K562 (cell line): ENCODE measurements at regions of chr11 and their contacts with region 1.

Region 1: DNA sequence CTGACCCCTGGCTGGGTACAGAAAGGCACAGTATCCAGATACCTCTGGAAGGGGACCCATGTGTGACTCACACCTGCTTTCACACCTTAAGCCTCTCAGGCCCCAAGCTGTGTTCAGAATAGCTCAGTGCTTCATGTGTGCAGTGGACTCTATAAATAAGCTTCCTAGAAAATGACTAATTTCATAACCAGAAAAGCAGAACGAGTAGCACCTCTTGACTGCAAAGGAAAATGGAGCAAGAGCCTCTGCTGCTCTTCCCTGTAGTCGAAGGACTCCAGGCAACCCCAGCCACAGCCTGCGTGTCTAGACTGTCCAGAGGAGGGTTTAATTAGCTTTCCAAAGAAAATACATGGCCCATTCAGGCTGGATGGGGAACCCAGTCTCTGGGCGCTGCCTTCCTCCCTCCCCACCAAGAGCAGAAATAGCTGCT is 23.1 kb downstream of the PTPN5 start:
- DNase-seq: no peak
- ATAC-seq: no peak
- H3K4me3 ChIP-seq: no peak overlapping the region
- H3K27ac ChIP-seq: no peak overlapping the region
- H3K4me1 ChIP-seq: no peaks in the 10 kb centered on the region
- H3K27me3 ChIP-seq: peaks cover 2 to 39% of the 10 kb centered on the region in 2 experiments; a peak in 4 of 5 replicates
- CTCF ChIP-seq: no peak
- EP300 ChIP-seq: no peak
- POLR2A ChIP-seq: no peak
- RAD21 ChIP-seq: no peak

Region 2: GRCh38 chr11:18115360-18116127 is 652.9 kb before region 1 on chr11:
- CTCF ChIA-PET with region 1: interaction called, 3 read pairs
- POLR2A ChIA-PET with region 1: no interaction called
- in situ Hi-C with region 1: no loop called
- intact Hi-C with region 1: loop called (anchors 1 kb)
- DNase-seq: peak; percentile 77 to 80 (median 77)
- ATAC-seq: peak; percentile 98
- H3K4me3 ChIP-seq: no peak overlapping the region
- H3K27ac ChIP-seq: no peak overlapping the region
- H3K4me1 ChIP-seq: no peaks in the 10 kb centered on the region
- H3K27me3 ChIP-seq: peaks cover 11 to 17% of the 10 kb centered on the region in 2 experiments; a peak in 4 of 5 replicates
- CTCF ChIP-seq: peak; percentile 83 to 87 (median 84)
- EP300 ChIP-seq: no peak
- POLR2A ChIP-seq: no peak
- RAD21 ChIP-seq: peak; percentile 63 to 83

Region 3: DNA sequence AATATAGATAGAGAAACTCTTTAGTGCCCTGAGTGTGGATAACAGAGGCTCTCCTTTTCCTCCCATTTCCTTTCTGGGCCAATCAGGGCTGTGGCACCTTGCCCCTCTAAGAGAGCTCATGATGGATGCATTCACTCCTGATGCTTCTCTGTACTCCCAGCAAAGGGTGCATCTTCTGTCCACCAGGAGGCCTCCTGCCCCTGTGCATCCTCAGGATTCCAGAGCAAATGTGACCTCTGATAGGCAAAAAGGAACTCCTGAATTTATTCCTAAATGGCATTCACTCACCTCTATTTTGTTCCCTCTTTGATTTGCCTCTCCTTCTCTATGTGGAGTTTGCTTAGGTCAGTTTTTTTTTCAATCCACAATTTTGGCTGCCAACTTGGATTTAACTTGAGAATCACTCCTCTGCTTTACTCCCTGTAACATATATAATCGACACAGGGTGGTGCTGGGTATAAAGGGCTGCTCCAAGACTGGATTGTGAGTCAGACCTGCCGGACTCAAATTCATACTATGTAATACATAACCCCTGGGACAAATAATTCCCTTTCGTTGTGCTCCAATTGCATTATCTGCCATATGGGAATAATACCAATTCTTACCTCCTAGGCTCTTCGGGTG is 597.0 kb before region 1 on chr11:
- CTCF ChIA-PET with region 1: no interaction called
- POLR2A ChIA-PET with region 1: no interaction called
- in situ Hi-C with region 1: no loop called
- intact Hi-C with region 1: loop called (anchors 1 kb)
- DNase-seq: peak; percentile 32 to 42 (median 38)
- ATAC-seq: peak; percentile 90
- H3K4me3 ChIP-seq: no peak overlapping the region
- H3K27ac ChIP-seq: no peak overlapping the region
- H3K4me1 ChIP-seq: no peaks in the 10 kb centered on the region; a peak in 1 of 5 replicates
- H3K27me3 ChIP-seq: peaks cover 6 to 13% of the 10 kb centered on the region in 2 experiments; a peak in 3 of 5 replicates
- CTCF ChIP-seq: peak; percentile 60 to 70 (median 64)
- EP300 ChIP-seq: no peak
- POLR2A ChIP-seq: no peak
- RAD21 ChIP-seq: peak; percentile 61 to 75

Region 4: GRCh38 chr11:18457431-18457830 is 311.1 kb before region 1 on chr11:
- CTCF ChIA-PET with region 1: no interaction called
- POLR2A ChIA-PET with region 1: no interaction called
- in situ Hi-C with region 1: no loop called
- intact Hi-C with region 1: loop called (anchors 10 kb)
- DNase-seq: peak in 3 of 4 experiments; percentile 3 to 12 (median 8)
- ATAC-seq: no peak
- H3K4me3 ChIP-seq: no peak overlapping the region
- H3K27ac ChIP-seq: no peak overlapping the region
- H3K4me1 ChIP-seq: peaks cover 0 to 9% of the 10 kb centered on the region in 2 experiments; a peak in 2 of 5 replicates
- H3K27me3 ChIP-seq: peaks cover 11 to 30% of the 10 kb centered on the region in 2 experiments; a peak in 3 of 5 replicates
- CTCF ChIP-seq: no peak
- EP300 ChIP-seq: no peak
- POLR2A ChIP-seq: no peak
- RAD21 ChIP-seq: no peak

Region 5: GRCh38 chr11:18540207-18541009 is 228.1 kb before region 1 on chr11:
- CTCF ChIA-PET with region 1: interaction called, 12 read pairs
- POLR2A ChIA-PET with region 1: interaction called, 3 read pairs
- in situ Hi-C with region 1: no loop called
- intact Hi-C with region 1: loop called (anchors 10 kb)
- DNase-seq: peak in 1 of 4 experiments; percentile 31
- ATAC-seq: peak; percentile 75; the same call in 2 of the 3 replicates
- H3K4me3 ChIP-seq: no peak overlapping the region
- H3K27ac ChIP-seq: no peak overlapping the region
- H3K4me1 ChIP-seq: no peaks in the 10 kb centered on the region
- H3K27me3 ChIP-seq: no peaks in the 10 kb centered on the region
- CTCF ChIP-seq: peak; percentile 24 to 70 (median 31); a peak in 3 of 6 replicates
- EP300 ChIP-seq: no peak
- POLR2A ChIP-seq: no peak
- RAD21 ChIP-seq: peak; percentile 69 to 79